ENCODE measurements at regions of chr19 and their contacts with region 1.

Region 1: DNA sequence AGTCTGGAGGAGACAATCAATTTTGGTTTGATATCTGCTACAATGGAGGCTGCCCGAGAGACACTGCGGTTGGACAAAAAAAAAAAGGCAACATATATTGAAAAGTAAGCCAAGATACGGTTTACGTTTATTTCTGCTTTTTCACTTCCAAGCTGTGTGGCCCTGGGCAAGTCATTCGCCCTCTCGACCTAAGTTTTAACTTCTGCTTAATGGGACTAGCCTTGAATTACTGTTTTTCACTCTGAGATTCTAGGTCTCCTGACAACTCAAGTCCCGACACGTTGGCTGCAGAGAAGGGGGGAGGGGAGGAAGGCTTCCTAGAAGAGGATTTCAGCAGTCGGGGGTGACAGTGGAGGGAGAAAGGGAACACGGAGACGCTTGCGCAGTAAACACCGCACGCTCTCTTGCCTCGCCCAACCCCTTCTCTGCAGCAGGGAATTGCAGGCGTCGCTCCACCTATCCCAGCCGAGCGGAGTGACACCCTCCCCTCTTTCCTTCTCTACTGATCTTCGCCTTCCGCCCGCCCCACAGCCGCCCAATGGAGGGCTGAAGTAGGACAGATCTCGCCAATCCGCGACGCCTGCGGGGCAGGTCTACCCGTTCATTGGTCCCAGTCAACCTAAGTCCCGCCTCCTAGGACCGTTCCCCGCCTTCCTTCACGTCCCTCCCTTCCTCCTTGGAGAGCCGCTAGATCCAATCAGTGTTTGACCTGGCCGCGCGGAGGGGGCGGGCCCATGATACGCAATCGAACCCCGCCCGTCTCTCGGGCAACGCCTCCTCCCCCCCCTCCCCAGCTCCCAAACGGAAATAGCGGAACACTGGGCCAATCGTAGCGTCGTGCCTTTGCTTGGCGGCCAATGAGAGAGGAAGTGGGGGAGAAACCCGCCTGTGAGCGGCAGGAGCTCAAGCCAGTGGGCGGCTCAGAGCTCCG is 529 bp upstream of the AP2A1 start:
- DNase-seq: peak; percentile 99 to 100 (median 99)
- ATAC-seq: peak; percentile 91
- H3K4me3 ChIP-seq: peak overlapping the region; percentile 32
- H3K27ac ChIP-seq: peak overlapping the region; percentile 92
- H3K4me1 ChIP-seq: peaks cover 43 to 51% of the 10 kb centered on the region in 2 experiments
- H3K27me3 ChIP-seq: no peaks in the 10 kb centered on the region
- CTCF ChIP-seq: no peak
- EP300 ChIP-seq: 0 out of 2 replicates have a peak, but pooled peaks have one; percentile 35
- POLR2A ChIP-seq: peak; percentile 89
- RAD21 ChIP-seq: peak in 1 of 2 experiments; percentile 35; a peak in 2 of 4 replicates

Region 2: GRCh38 chr19:49486710-49487276 is 279.5 kb before region 1 on chr19:
- CTCF ChIA-PET with region 1: no interaction called
- POLR2A ChIA-PET with region 1: no interaction called
- in situ Hi-C with region 1: no loop called
- intact Hi-C with region 1: no loop called
- DNase-seq: no peak
- ATAC-seq: no peak
- H3K4me3 ChIP-seq: peak overlapping the region; percentile 14; the same call in 1 of the 2 replicates
- H3K27ac ChIP-seq: peak overlapping the region; percentile 83
- H3K4me1 ChIP-seq: peaks cover 19 to 30% of the 10 kb centered on the region in 2 experiments; a peak in 3 of 5 replicates
- H3K27me3 ChIP-seq: no peaks in the 10 kb centered on the region
- CTCF ChIP-seq: peak in 1 of 3 experiments; percentile 15; a peak in 1 of 6 replicates
- EP300 ChIP-seq: no peak
- POLR2A ChIP-seq: no peak
- RAD21 ChIP-seq: 0 out of 4 replicates have a peak, but pooled peaks of 1 of the 2 experiments have one; percentile 5

Region 3: DNA sequence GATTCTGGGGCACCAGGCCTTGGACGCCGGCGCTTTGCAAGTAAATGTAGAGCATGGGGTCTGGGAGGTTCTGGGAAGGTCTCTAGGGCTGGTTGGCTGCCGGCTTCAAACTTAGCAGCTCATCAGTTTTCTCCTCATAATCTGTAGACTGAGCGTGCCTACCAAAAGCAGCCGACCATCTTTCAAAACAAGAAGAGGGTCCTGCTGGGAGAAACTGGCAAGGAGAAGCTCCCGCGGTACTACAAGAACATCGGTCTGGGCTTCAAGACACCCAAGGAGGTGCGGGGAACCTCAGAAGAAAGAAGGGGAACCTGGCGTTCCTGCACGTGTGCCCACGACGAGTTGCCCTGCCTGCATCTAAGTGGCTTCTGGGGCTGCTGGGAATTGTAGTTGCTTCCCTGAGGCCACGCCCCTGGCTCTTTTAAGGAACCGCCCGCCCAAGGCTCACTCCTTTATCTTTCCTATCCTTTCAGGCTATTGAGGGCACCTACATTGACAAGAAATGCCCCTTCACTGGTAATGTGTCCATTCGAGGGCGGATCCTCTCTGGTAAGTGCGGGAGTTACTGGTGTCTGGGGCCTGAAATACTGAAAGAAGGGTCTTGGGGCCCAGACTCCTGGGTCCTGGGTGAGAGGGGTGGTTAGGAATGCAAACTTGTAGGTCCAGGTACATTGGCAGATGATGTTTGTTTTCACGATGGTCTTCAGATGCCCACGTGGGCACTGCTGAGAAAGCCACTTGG is 269.1 kb before region 1 on chr19:
- CTCF ChIA-PET with region 1: no interaction called
- POLR2A ChIA-PET with region 1: no interaction called
- in situ Hi-C with region 1: no loop called
- intact Hi-C with region 1: loop called (anchors 1 kb)
- DNase-seq: peak; percentile 47 to 89 (median 63)
- ATAC-seq: peak; percentile 37
- H3K4me3 ChIP-seq: peak overlapping the region; percentile 89
- H3K27ac ChIP-seq: peak overlapping the region; percentile 94
- H3K4me1 ChIP-seq: peaks cover 33 to 44% of the 10 kb centered on the region in 2 experiments; a peak in 4 of 5 replicates
- H3K27me3 ChIP-seq: no peaks in the 10 kb centered on the region
- CTCF ChIP-seq: no peak
- EP300 ChIP-seq: no peak
- POLR2A ChIP-seq: peak; percentile 68
- RAD21 ChIP-seq: no peak

Region 4: GRCh38 chr19:49590071-49590970 is 176.0 kb before region 1 on chr19:
- CTCF ChIA-PET with region 1: no interaction called
- POLR2A ChIA-PET with region 1: no interaction called
- in situ Hi-C with region 1: no loop called
- intact Hi-C with region 1: loop called (anchors 5 kb)
- DNase-seq: peak; percentile 97 to 99 (median 98)
- ATAC-seq: peak; percentile 89
- H3K4me3 ChIP-seq: peak overlapping the region; percentile 88
- H3K27ac ChIP-seq: peak overlapping the region; percentile 95
- H3K4me1 ChIP-seq: peaks cover 10 to 42% of the 10 kb centered on the region in 2 experiments; a peak in 4 of 5 replicates
- H3K27me3 ChIP-seq: no peaks in the 10 kb centered on the region
- CTCF ChIP-seq: 0 out of 6 replicates have a peak, but pooled peaks of 1 of the 3 experiments have one; percentile 18
- EP300 ChIP-seq: no peak; the same call in 1 of the 2 replicates
- POLR2A ChIP-seq: peak; percentile 97
- RAD21 ChIP-seq: 0 out of 4 replicates have a peak, but pooled peaks of 1 of the 2 experiments have one; percentile 6

Region 5: DNA sequence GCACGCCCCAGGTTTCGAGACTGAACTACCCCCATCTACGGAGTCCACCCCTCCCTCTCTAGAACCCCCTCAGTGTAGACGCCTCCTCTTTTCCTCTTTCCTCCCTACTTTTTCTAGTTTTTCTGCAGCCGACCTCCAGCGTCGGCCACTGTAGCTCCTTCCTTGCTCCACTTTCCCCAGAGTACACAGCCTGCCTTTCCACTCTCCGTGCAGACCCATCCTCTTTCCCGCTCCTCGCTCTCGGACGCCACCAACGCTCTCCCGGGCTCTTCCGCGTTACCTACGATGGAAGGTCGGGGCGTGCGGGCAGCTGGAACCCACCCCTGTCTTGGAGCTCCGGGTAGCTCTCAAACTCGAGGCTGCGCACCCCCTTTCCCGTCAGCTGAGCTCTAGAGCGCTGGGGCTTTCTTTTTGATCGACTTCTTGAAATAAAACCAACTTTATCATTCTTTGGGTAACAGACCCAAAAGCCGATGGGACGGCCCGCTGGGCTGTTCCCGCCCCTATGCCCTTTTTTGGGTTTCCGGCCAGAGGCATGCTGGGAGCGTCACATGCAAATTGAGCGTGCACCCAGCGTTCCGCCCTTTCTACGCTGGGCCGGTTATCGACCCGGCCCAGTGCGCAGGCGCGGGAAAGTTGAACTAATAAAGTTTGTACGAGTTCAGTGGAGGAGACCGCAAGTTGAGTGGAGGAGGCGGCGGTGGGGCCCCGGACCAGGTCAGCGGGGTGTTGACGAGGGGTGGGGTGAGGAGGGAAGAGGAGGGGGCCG is 100.7 kb before region 1 on chr19 and contains the starts of genes BCL2L12 and IRF3:
- CTCF ChIA-PET with region 1: no interaction called
- POLR2A ChIA-PET with region 1: no interaction called
- in situ Hi-C with region 1: no loop called
- intact Hi-C with region 1: no loop called
- DNase-seq: peak; percentile 85 to 99 (median 91)
- ATAC-seq: peak; percentile 92
- H3K4me3 ChIP-seq: peak within 1 kb of the TSS; percentile 81
- H3K27ac ChIP-seq: peak within 1 kb of the TSS; percentile 91
- H3K4me1 ChIP-seq: peaks cover 7 to 33% of the 10 kb centered on the region in 2 experiments; a peak in 4 of 5 replicates
- H3K27me3 ChIP-seq: no peaks in the 10 kb centered on the region
- CTCF ChIP-seq: 0 out of 6 replicates have a peak, but pooled peaks of 1 of the 3 experiments have one; percentile 15
- EP300 ChIP-seq: no peak
- POLR2A ChIP-seq: peak; percentile 89
- RAD21 ChIP-seq: no peak
- polyA plus RNA-seq, gene BCL2L12: 7.4 to 7.5 TPM
- polyA plus RNA-seq, gene IRF3: 7.5 to 11.6 TPM

Region 6: GRCh38 chr19:49684218-49684982 is 81.9 kb before region 1 on chr19:
- CTCF ChIA-PET with region 1: interaction called, 5 read pairs
- POLR2A ChIA-PET with region 1: no interaction called
- in situ Hi-C with region 1: no loop called
- intact Hi-C with region 1: loop called (anchors 2 kb)
- DNase-seq: peak in 2 of 4 experiments; percentile 37 to 50
- ATAC-seq: peak; percentile 68
- H3K4me3 ChIP-seq: no peak overlapping the region
- H3K27ac ChIP-seq: no peak overlapping the region
- H3K4me1 ChIP-seq: peaks cover 16 to 70% of the 10 kb centered on the region in 2 experiments
- H3K27me3 ChIP-seq: no peaks in the 10 kb centered on the region
- CTCF ChIP-seq: peak; percentile 59 to 69 (median 63)
- EP300 ChIP-seq: no peak
- POLR2A ChIP-seq: peak; percentile 73
- RAD21 ChIP-seq: peak in 1 of 2 experiments; percentile 35; a peak in 2 of 4 replicates

Region 7: DNA sequence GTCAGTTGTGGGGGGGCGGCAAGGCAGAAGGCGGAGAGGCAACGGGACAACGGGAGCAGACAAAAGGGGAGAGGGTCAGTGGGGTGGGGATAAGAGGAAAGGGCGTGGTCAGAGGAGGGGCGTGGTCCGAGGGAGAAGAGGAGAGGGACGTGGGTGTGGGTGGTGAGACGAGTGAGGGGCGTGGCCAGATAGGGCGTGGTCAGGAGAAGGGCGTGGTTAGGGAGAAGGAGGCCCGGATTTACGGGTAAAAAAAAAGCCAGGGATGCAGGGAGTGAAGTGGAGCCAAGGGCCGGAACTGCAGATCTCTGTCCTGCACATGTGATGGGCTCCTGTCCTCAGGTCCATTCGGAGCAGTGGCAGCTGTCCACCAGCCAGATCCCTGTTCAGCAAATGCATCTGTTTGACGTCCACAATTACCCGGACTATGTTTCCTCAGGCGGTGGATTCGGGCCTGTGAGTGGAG is 53.8 kb before region 1 on chr19:
- CTCF ChIA-PET with region 1: no interaction called
- POLR2A ChIA-PET with region 1: no interaction called
- in situ Hi-C with region 1: no loop called
- intact Hi-C with region 1: loop called (anchors 2 kb)
- DNase-seq: peak; percentile 95 to 97 (median 96)
- ATAC-seq: peak; percentile 91
- H3K4me3 ChIP-seq: peak overlapping the region; percentile 34
- H3K27ac ChIP-seq: peak overlapping the region; percentile 50; the same call in 2 of the 3 replicates
- H3K4me1 ChIP-seq: peaks cover 19 to 33% of the 10 kb centered on the region in 2 experiments; a peak in 4 of 5 replicates
- H3K27me3 ChIP-seq: no peaks in the 10 kb centered on the region
- CTCF ChIP-seq: no peak
- EP300 ChIP-seq: peak; percentile 7; the same call in 1 of the 2 replicates
- POLR2A ChIP-seq: peak; percentile 39
- RAD21 ChIP-seq: no peak

Region 8: GRCh38 chr19:49808711-49809159 is 42.5 kb after region 1 on chr19:
- CTCF ChIA-PET with region 1: no interaction called
- POLR2A ChIA-PET with region 1: interaction called, 3 read pairs
- in situ Hi-C with region 1: no loop called
- intact Hi-C with region 1: loop called (anchors 5 kb)
- DNase-seq: peak; percentile 92 to 97 (median 96)
- ATAC-seq: peak; percentile 76
- H3K4me3 ChIP-seq: no peak overlapping the region
- H3K27ac ChIP-seq: no peak overlapping the region; the same call in 2 of the 3 replicates
- H3K4me1 ChIP-seq: peaks cover 25 to 55% of the 10 kb centered on the region in 2 experiments
- H3K27me3 ChIP-seq: no peaks in the 10 kb centered on the region
- CTCF ChIP-seq: no peak
- EP300 ChIP-seq: no peak
- POLR2A ChIP-seq: peak; percentile 49
- RAD21 ChIP-seq: no peak

Region 9: GRCh38 chr19:49869441-49870176 is 103.3 kb after region 1 on chr19:
- CTCF ChIA-PET with region 1: no interaction called
- POLR2A ChIA-PET with region 1: no interaction called
- in situ Hi-C with region 1: no loop called
- intact Hi-C with region 1: loop called (anchors 5 kb)
- DNase-seq: peak; percentile 82 to 99 (median 89)
- ATAC-seq: peak; percentile 87
- H3K4me3 ChIP-seq: peak overlapping the region; percentile 47
- H3K27ac ChIP-seq: peak overlapping the region; percentile 70
- H3K4me1 ChIP-seq: peaks cover 40 to 84% of the 10 kb centered on the region in 2 experiments
- H3K27me3 ChIP-seq: no peaks in the 10 kb centered on the region
- CTCF ChIP-seq: 0 out of 6 replicates have a peak, but pooled peaks of 1 of the 3 experiments have one; percentile 1
- EP300 ChIP-seq: no peak
- POLR2A ChIP-seq: peak; percentile 60
- RAD21 ChIP-seq: no peak